ENCODE measurements at regions of chr14 and their contacts with region 1.

Region 1: DNA sequence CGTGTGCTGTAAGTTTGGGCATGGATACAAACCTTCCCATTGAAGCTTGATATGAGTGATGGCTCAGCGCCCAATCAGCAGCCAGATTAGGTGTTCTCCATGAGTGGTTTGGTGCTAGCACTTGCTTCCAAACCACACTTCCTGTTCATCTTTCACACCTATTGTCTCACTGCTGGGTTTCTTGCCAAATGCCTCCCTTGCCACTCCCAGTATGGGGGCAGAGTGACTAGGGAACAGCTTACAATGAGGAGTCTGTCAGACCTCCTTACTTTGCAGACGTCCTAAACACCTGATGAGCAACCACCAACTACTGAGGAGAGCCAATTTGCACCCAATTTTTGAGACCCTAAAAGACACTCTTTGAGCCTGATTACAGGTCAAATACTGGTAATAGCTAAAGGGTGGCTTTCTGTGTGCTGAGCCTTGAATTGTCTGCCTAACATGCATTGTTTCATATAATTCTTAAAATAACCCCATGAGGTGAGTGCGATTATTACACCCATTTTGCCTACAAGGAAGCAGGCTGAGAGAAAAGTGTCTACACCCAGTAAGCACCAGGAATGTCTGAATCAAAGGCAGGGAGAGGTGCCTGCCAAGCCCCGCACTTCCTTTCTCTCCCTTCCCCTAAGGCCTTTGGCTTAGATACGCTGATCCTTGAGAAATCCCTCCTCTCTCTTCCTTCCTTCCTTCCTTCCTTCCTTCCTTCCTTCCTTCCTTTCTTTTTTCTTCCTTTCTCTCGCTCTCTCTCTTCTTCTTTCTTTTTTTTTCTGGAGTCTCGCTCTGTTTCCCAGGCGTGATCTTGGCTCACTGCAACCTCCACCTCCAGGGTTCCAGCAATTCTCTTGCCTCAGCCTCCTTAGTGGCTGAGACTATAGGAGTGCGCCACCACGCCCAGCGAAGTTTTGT is 48.2 kb upstream of the FOS start:
- DNase-seq: no peak
- H3K4me3 ChIP-seq: no peak overlapping the region
- H3K27ac ChIP-seq: peak overlapping the region in 12 of 59 donors; percentile 3 to 67 (median 19)
- H3K27me3 ChIP-seq: no peaks in the 10 kb centered on the region
- CTCF ChIP-seq: peak in 3 of 56 donors; percentile 9 to 23 (median 20)

Region 2: GRCh38 chr14:75182841-75183624 is 47.4 kb before region 1 on chr14:
- intact Hi-C with region 1: loop called in 1 of 2 experiments (anchors 5 kb)
- DNase-seq: no peak
- H3K4me3 ChIP-seq: no peak overlapping the region
- H3K27ac ChIP-seq: peak overlapping the region in 8 of 59 donors; percentile 2 to 40 (median 26)
- H3K27me3 ChIP-seq: no peaks in the 10 kb centered on the region
- CTCF ChIP-seq: no peak

Region 3: DNA sequence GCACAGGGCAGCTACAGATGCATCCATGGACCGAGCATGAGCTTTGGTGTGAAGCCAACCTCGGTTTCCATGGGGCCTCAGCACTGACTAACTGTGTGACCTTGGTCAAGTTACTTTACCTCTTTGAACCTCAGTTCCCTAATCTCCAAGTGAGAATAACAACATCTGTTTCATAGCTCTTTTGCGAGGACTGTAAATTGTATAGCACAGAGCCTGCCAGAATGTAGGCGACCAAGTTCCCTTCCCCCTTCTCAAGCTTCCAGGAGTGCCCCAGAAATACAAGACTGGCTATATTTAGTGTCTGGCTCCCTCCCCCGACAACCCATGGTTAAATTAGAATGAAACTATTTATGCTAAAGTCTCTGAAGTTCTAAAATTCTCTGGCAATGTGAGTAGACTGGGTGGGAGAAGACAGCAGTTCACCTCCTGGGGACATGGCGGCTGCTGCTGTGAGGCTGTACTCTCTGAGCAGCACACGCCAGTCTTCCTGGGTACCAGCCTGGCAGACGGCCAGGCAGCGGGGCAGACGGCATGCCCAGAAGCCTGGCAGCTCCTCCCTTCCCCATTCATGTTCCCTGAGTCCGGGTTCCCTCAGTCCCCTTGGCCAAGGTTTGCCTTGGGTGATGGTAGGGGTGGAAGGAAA is 32.0 kb before region 1 on chr14:
- intact Hi-C with region 1: loop called in 1 of 2 experiments (anchors 5 kb)
- DNase-seq: peak in 7 of 10 donors; percentile 31 to 60 (median 50)
- H3K4me3 ChIP-seq: no peak overlapping the region
- H3K27ac ChIP-seq: peak overlapping the region in 9 of 59 donors; percentile 6 to 43 (median 37)
- H3K27me3 ChIP-seq: no peaks in the 10 kb centered on the region
- CTCF ChIP-seq: no peak

Region 4: DNA sequence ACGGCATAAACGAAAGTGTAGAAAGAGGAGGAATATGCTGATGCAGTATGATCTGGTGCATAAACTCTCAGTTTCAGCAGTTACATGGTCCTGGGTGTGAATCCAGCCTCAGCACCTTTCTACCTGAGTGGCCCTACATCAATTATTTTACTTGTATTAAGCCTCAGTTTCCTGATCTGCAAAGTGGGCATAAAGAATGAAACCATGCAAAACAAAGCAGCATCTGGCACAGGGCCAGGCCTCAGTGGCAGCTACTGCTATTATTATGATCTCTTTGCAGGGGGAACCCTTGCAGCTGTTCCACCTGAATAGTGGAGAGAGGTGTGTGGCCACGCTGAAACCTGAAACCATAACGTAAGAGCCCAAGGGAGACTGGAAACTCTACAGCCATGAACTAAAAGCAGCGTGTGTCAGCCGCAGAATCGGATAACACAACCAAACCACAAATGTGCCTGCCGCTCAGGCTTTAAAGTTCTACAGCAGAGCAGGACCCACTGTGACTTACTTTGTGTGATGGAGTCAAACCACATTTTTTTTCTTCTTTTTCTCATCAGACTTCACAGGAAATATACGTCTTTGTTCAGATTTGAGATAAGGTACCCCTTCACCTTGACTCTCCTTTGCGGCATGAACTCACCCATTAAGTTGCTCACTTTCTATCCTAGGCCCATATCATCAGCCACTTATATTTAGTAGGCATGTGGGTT is 19.0 kb after region 1 on chr14:
- intact Hi-C with region 1: no loop called
- DNase-seq: no peak
- H3K4me3 ChIP-seq: no peak overlapping the region
- H3K27ac ChIP-seq: no peak overlapping the region
- H3K27me3 ChIP-seq: no peaks in the 10 kb centered on the region
- CTCF ChIP-seq: no peak

Region 5: DNA sequence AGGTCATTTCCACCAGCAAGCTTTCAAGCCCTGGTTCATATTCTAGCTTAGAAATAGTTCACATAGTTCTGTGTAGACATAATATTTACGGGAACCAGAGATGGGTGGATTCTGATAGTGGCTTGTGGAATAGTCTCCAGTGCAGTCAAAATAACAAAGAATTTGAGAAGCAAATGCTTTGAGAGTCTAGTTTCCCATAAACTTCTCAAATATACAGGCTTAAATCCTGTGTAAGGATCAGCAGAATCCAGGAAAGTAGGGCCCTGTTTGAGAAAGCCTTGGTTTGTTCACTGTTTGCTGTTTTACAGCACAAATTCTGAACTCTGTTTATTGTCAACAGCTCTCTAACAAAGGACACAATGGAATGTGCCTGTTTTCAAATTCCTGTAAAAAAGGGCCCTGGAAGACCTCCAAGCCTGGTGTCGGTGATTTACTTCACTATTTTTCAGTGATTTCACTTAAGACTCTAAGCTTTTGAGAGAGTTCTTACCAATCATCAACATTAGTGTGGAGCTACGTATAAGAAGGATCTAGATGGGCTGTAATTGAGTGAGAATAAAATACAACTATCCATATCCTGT is 36.8 kb after region 1 on chr14:
- intact Hi-C with region 1: no loop called
- DNase-seq: no peak
- H3K4me3 ChIP-seq: no peak overlapping the region
- H3K27ac ChIP-seq: peak overlapping the region in 48 of 59 donors; percentile 1 to 81 (median 52)
- H3K27me3 ChIP-seq: no peaks in the 10 kb centered on the region
- CTCF ChIP-seq: no peak

Region 6: GRCh38 chr14:75278422-75279161 is 48.2 kb after region 1 on chr14 and contains the start of gene FOS:
- intact Hi-C with region 1: loop called in 1 of 2 experiments (anchors 5 kb)
- DNase-seq: peak; percentile 82 to 96 (median 94)
- H3K4me3 ChIP-seq: peak within 1 kb of the TSS; percentile 63 to 97 (median 85)
- H3K27ac ChIP-seq: peak within 1 kb of the TSS; percentile 77 to 100 (median 99)
- H3K27me3 ChIP-seq: no peaks in the 10 kb centered on the region
- CTCF ChIP-seq: peak in 4 of 56 donors; percentile 5 to 23 (median 16)
- total RNA-seq, gene FOS: 7.4 to 738 (median 68.8) TPM

Region 7: GRCh38 chr14:75293920-75294642 is 63.7 kb after region 1 on chr14:
- intact Hi-C with region 1: loop called in 1 of 2 experiments (anchors 5 kb)
- DNase-seq: peak; percentile 84 to 98 (median 92)
- H3K4me3 ChIP-seq: peak overlapping the region; percentile 57 to 94 (median 77)
- H3K27ac ChIP-seq: peak overlapping the region; percentile 57 to 99 (median 93)
- H3K27me3 ChIP-seq: no peaks in the 10 kb centered on the region
- CTCF ChIP-seq: peak in 16 of 56 donors; percentile 1 to 29 (median 16)

Measured in dorsolateral prefrontal cortex (tissue), 120 donors.